ENCODE measurements at regions of chrX and their contacts with region 1.

Region 1: GRCh38 chrX:11381464-11381863 is 88.3 kb downstream of the AMELX start:
- DNase-seq: peak in 1 of 2 donors; percentile 79
- H3K4me3 ChIP-seq: no peak overlapping the region
- H3K27ac ChIP-seq: peak overlapping the region; percentile 61
- H3K4me1 ChIP-seq: peaks cover 4 to 29% of the 10 kb centered on the region in 2 donors
- H3K27me3 ChIP-seq: no peaks in the 10 kb centered on the region
- CTCF ChIP-seq: peak; percentile 19 to 63 (median 61)

Region 2: DNA sequence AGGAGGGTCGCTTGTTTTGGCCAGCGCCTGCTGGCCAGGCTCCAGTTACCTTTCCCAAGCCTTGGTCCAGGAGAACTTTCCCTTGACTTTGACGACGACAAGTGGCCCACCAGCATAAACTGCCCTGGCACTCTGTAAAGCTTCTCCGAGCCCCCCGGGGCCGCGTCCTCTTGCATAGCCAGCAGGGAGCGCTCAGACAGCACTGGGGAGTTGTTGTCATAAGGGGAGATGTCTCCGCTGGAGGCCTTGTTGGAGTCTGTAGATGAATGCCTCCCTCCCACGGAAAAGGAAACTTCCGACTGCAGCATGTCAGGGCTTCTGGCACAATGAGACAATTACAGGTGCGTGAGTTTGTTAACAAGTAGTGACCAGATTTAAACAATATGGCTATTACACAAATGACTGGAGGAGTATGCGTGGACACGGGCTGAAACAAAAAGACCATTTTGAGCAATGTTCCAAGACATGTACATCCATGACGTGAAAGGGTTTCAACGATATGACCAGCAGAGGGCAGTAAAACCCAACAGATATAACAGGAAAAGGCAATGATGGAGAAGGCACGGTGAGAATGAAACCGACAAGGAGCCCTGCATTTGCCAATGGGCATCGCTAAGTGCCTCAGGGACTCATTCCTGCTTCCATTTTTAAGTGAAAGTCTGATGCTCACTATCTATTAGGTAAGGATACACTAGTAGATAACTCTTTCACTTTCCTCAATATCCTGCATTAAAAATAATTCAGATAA is 237.4 kb before region 1 on chrX:
- intact Hi-C with region 1: loop called (anchors 5 kb)
- DNase-seq: peak in 1 of 2 donors; percentile 76
- H3K4me3 ChIP-seq: no peak overlapping the region
- H3K27ac ChIP-seq: no peak overlapping the region
- H3K4me1 ChIP-seq: no peaks in the 10 kb centered on the region
- H3K27me3 ChIP-seq: no peaks in the 10 kb centered on the region
- CTCF ChIP-seq: peak; percentile 51 to 66 (median 59)

Region 3: DNA sequence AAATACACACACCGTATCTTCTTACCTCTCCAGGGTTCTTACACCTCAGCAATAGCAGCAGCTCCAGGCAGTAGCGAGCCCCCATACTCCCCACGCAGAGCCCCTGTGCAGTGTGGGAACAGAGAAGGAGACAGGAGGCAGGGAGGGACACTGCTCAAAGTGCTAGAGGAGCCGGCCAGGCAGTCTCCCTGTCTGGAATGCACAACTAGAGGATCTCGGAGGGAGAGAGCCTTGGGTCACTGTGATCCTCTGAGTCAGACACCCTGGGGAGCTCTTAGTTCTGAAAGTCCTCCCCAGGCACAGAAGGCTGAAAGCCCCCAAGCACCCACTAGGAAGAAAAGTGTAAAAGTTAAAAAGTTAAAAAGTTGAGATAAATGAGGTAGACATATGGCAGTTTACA is 72.2 kb before region 1 on chrX:
- intact Hi-C with region 1: no loop called
- DNase-seq: no peak
- H3K4me3 ChIP-seq: no peak overlapping the region
- H3K27ac ChIP-seq: no peak overlapping the region
- H3K4me1 ChIP-seq: no peaks in the 10 kb centered on the region
- H3K27me3 ChIP-seq: no peaks in the 10 kb centered on the region
- CTCF ChIP-seq: no peak

Region 4: DNA sequence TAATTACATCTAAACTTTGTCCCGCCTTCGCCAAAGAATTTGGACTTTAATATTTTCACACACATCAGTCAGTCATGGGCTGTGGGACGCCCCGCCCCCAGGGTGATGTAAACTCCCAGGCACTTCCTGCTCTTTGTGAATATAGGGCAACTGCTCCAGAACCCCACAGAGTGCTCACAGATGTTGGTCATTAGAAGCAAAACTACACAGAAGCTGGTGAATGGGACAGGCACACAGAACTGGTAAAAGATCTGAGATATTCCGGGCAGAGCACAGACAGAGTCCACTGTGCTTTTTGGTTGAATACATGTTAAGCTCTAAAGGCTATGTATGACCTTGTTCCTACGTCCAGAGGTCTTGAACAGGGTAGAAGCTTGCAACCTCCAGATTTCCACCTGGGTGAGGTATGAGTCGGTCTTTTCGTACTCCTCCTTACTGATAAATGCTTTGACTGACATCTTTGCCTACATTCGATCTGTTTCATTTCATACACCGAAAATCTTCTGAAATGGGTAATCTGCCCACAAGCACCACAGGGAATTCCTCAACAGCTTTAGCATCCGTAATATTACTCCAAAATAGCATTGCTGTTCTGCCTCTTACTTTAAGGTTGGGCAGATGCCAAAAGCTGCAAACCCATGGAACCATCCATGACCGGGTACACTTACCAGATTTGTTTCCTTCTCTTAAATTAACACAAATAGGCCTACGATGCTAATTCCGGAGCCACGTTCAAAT is 56.3 kb after region 1 on chrX:
- intact Hi-C with region 1: loop called (anchors 5 kb)
- DNase-seq: peak; percentile 23 to 88
- H3K4me3 ChIP-seq: peak overlapping the region in 1 of 2 donors; percentile 43
- H3K27ac ChIP-seq: peak overlapping the region; percentile 75 to 76
- H3K4me1 ChIP-seq: peaks cover 0 to 8% of the 10 kb centered on the region in 2 donors
- H3K27me3 ChIP-seq: no peaks in the 10 kb centered on the region
- CTCF ChIP-seq: no peak

Region 5: GRCh38 chrX:11470250-11470974 is 88.9 kb after region 1 on chrX:
- intact Hi-C with region 1: loop called (anchors 5 kb)
- DNase-seq: no peak
- H3K4me3 ChIP-seq: no peak overlapping the region
- H3K27ac ChIP-seq: peak overlapping the region; percentile 46 to 73
- H3K4me1 ChIP-seq: peaks cover 0 to 33% of the 10 kb centered on the region in 2 donors
- H3K27me3 ChIP-seq: no peaks in the 10 kb centered on the region
- CTCF ChIP-seq: no peak

Region 6: GRCh38 chrX:11758400-11759171 is 377.1 kb after region 1 on chrX:
- intact Hi-C with region 1: loop called (anchors 10 kb)
- DNase-seq: peak; percentile 29 to 92
- H3K4me3 ChIP-seq: peak overlapping the region; percentile 64 to 73
- H3K27ac ChIP-seq: peak overlapping the region; percentile 75 to 90
- H3K4me1 ChIP-seq: no peaks in the 10 kb centered on the region
- H3K27me3 ChIP-seq: no peaks in the 10 kb centered on the region
- CTCF ChIP-seq: peak; percentile 52 to 60 (median 59)

Measured in ascending aorta (tissue), 2 donors.